ENCODE measurements at regions of chr10 and their contacts with region 1.

Region 1: GRCh38 chr10:110803830-110804338 is 67.8 kb upstream of the PDCD4 start:
- DNase-seq: peak; percentile 36
- H3K4me3 ChIP-seq: no peak overlapping the region
- H3K27ac ChIP-seq: no peak overlapping the region
- H3K4me1 ChIP-seq: peaks cover 3% of the 10 kb centered on the region
- H3K27me3 ChIP-seq: peaks cover 3% of the 10 kb centered on the region in 2 experiments
- CTCF ChIP-seq: peak in 1 of 2 donors; percentile 62
- POLR2A ChIP-seq: no peak

Region 2: GRCh38 chr10:110871298-110872084 is 67.6 kb after region 1 on chr10 and contains the start of gene PDCD4:
- CTCF ChIA-PET with region 1: interaction called, 5 read pairs
- POLR2A ChIA-PET with region 1: interaction called, 3 read pairs
- dilution Hi-C with region 1: no loop called
- intact Hi-C with region 1: loop called (anchors 2 kb)
- DNase-seq: peak; percentile 99
- H3K4me3 ChIP-seq: peak within 1 kb of the TSS; percentile 55 to 96 (median 85)
- H3K27ac ChIP-seq: peak within 1 kb of the TSS; percentile 57
- H3K4me1 ChIP-seq: peaks cover 21% of the 10 kb centered on the region
- H3K27me3 ChIP-seq: peaks cover 5 to 7% of the 10 kb centered on the region in 2 experiments
- CTCF ChIP-seq: no peak
- POLR2A ChIP-seq: peak; percentile 80
- total RNA-seq, gene PDCD4: 46.1 and 47.9 TPM in 2 replicates

Region 3: DNA sequence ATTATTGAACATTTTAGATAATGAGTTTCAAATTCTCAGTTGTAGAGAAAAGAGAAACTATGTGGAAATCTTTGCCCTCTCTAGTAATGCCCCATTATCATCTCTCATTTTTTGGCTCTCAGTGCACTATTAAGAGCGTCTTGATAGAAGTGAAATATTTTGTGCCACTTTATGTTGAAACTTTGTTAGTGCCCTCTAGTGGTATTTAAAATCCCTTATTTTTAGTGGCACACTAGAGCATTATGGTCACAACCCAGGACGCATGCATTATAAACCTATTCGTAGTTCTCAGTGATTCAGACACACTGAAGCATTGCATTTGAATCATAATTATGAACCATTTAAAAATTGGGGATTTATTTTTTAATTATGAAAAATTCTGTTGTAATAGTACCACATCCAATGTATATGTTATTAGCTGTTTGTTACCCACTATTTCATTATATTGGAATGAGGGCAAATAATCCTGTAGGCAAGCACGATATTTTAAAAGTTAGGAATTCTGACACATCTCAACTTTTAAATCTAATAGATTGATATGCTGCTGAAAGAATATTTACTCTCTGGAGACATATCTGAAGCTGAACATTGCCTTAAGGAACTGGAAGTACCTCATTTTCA is 89.8 kb after region 1 on chr10:
- CTCF ChIA-PET with region 1: interaction called, 7 read pairs
- POLR2A ChIA-PET with region 1: no interaction called
- dilution Hi-C with region 1: no loop called
- intact Hi-C with region 1: loop called (anchors 2 kb)
- DNase-seq: peak; percentile 62
- H3K4me3 ChIP-seq: no peak overlapping the region
- H3K27ac ChIP-seq: no peak overlapping the region
- H3K4me1 ChIP-seq: no peaks in the 10 kb centered on the region
- H3K27me3 ChIP-seq: no peaks in the 10 kb centered on the region
- CTCF ChIP-seq: peak; percentile 17 to 29
- POLR2A ChIP-seq: no peak

Region 4: GRCh38 chr10:111990734-111991133 is 1186.8 kb after region 1 on chr10:
- CTCF ChIA-PET with region 1: no interaction called
- POLR2A ChIA-PET with region 1: interaction called, 10 read pairs
- dilution Hi-C with region 1: no loop called
- intact Hi-C with region 1: no loop called
- DNase-seq: no peak
- H3K4me3 ChIP-seq: no peak overlapping the region
- H3K27ac ChIP-seq: no peak overlapping the region
- H3K4me1 ChIP-seq: no peaks in the 10 kb centered on the region
- H3K27me3 ChIP-seq: no peaks in the 10 kb centered on the region
- CTCF ChIP-seq: no peak
- POLR2A ChIP-seq: no peak